Activated CD8-positive, alpha-beta T cell treated with anti-CD3 and anti-CD28 coated beads for 36 hours (primary cell): ENCODE measurements at regions of chr7 and their contacts with region 1.

Region 1: DNA sequence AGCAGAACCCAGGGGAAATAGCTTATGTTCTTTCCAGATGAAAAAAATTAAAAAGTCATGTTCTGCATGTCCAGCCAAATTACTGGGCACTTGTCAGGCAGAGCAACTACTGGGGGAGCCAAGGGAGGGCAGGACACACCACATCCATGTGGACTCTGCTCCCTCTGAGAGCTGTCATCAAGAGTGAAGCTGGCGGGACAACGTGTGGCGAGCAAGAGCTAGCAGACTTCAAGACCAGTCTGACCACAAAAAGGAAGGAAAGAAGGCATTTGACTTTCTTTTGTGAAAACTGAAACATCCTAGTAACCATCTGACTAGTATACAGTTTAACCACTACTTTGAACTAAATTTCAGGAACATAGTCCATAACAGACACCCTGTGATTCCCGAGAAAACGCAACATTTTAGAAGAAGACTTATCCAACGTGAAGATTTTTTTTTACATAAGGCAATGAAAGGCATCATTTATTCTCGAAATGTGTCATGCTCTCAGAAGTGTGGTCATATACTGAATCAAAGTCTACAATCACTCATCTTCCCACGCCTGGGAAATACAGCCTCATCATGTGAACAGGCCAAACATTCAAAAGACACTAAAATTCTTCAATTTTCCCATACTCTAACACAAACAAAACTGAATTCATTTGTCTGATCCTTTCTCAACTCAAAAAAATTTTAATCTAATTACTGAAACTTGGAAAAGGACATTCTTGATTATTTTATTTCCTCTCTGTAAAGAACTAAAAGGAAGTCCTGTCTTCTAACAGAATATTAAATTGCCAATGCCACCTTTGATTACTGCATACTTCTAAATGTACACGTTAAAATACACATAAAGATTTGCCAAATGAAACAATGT is 15.5 kb downstream of the CYTH3 start:
- DNase-seq: peak; percentile 63
- ATAC-seq: peak; percentile 89
- H3K4me3 Mint-ChIP-seq: no peak overlapping the region
- H3K27ac Mint-ChIP-seq: peak overlapping the region; percentile 26
- H3K4me1 Mint-ChIP-seq: peaks cover 45% of the 10 kb centered on the region
- H3K27me3 Mint-ChIP-seq: peaks cover 7% of the 10 kb centered on the region
- CTCF ChIP-seq: no peak

Region 2: GRCh38 chr7:5750026-5750653 is 506.8 kb before region 1 on chr7:
- CTCF ChIA-PET with region 1: no interaction called
- POLR2A ChIA-PET with region 1: no interaction called
- intact Hi-C with region 1: no loop called
- DNase-seq: no peak
- ATAC-seq: no peak
- H3K4me3 Mint-ChIP-seq: no peak overlapping the region
- H3K27ac Mint-ChIP-seq: no peak overlapping the region
- H3K4me1 Mint-ChIP-seq: peaks cover 4% of the 10 kb centered on the region
- H3K27me3 Mint-ChIP-seq: no peaks in the 10 kb centered on the region
- CTCF ChIP-seq: no peak

Region 3: GRCh38 chr7:6221340-6222319 is 35.3 kb before region 1 on chr7:
- CTCF ChIA-PET with region 1: interaction called, 3 read pairs
- POLR2A ChIA-PET with region 1: no interaction called
- intact Hi-C with region 1: loop called (anchors 1 kb)
- DNase-seq: peak; percentile 65
- ATAC-seq: peak; percentile 98
- H3K4me3 Mint-ChIP-seq: no peak overlapping the region
- H3K27ac Mint-ChIP-seq: peak overlapping the region; percentile 65
- H3K4me1 Mint-ChIP-seq: peaks cover 17% of the 10 kb centered on the region
- H3K27me3 Mint-ChIP-seq: peaks cover 5% of the 10 kb centered on the region
- CTCF ChIP-seq: no peak